ENCODE measurements at regions of chr18 and their contacts with region 1.

Region 1: GRCh38 chr18:46042571-46043123 is 29.4 kb downstream of the PSTPIP2 start:
- DNase-seq: peak; percentile 66
- ATAC-seq: peak; percentile 81
- H3K4me3 Mint-ChIP-seq: peak overlapping the region; percentile 12
- H3K27ac Mint-ChIP-seq: no peak overlapping the region
- H3K4me1 Mint-ChIP-seq: peaks cover 41% of the 10 kb centered on the region
- H3K27me3 Mint-ChIP-seq: no peaks in the 10 kb centered on the region

Region 2: DNA sequence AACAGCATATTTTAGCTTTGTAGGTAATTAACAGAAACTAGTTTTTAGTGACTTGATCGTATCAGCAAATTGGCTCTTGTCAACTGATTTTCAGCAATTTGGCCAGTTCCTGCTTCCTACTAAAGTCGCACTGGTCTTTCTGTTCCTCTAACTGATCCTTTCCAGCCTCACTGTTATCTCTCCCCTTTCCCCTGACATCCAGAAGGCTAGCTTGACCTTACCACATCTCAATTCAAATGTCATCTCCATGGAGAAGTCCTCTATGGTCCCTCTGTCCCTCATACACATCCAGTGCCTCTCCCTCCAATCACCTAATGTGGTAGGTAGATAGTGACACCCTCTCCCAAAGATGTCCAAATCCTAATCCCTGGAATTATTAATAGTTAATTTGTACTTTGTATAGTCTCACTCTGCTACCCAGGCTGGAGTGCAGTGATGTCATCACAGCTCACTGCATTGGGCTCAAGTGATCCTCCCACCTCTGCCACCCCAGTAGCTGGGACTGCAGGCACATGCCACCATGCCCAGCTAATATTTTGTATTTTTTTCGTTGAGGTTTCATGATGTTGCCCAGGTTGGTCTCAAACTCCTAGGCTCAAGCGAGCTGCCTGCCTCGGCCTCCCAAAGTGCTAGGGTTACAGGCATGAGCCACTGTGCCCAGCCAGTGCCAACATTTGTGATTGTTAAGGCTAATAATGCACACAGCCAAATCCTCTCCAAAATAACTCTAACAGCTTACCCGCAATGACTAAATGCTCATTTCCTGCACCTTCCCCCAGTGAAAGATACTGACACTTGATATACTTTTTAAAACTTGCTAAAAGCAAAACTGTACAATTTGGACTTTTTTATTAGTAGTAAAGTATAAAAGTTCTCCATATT is 12.6 kb after region 1 on chr18:
- CTCF ChIA-PET with region 1: interaction called, 10 read pairs
- POLR2A ChIA-PET with region 1: no interaction called
- DNase-seq: no peak
- ATAC-seq: peak; percentile 79
- H3K4me3 Mint-ChIP-seq: peak overlapping the region; percentile 49
- H3K27ac Mint-ChIP-seq: peak overlapping the region; percentile 76
- H3K4me1 Mint-ChIP-seq: peaks cover 31% of the 10 kb centered on the region
- H3K27me3 Mint-ChIP-seq: no peaks in the 10 kb centered on the region

Measured in activated CD8-positive, alpha-beta T cell treated with anti-CD3 and anti-CD28 coated beads, Interleukin-2, amount 10 ng/mL, durations not matched to agents 7 days and 5 days (primary cell).